Common myeloid progenitor, CD34-positive (primary cell): ENCODE measurements at regions of chr19 and their contacts with region 1.

Region 1: DNA sequence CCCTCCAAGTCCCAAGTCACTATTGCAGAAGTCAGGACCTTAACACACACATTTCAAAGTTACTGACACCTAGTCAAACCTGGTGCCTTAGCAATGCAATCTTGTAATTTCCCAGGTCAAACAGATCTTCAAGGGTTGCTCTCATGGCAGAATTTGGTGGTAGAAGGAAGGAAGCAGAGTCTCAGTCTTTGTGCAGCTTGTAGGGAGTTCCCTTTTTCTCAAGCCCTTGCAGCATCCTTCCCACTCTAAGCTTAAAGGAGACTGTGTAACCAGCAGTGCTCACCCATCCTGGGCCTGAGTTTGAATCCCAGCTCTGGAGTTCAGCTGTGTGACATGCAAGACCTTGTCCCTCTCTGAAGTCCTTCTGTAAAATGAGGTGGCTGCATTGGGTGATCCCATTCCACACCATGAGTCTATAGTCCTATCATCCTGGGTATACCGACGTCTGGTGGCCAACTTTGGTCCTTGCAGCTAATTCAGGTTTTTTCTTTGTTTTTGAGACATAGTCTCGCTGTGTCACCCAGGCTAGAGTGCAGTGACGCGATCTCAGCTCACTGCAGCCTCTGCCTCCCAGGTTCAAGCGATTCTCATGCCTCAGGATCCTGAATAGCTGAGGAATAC is 9.8 kb downstream of the SIGLEC10 start:
- DNase-seq: peak; percentile 42 to 85 (median 84)
- H3K4me3 ChIP-seq: peak overlapping the region in 1 of 7 experiments; percentile 16
- H3K27ac ChIP-seq: no peak overlapping the region
- H3K4me1 ChIP-seq: peaks cover 12 to 34% (median 32%) of the 10 kb centered on the region in 4 experiments
- H3K27me3 ChIP-seq: no peaks in the 10 kb centered on the region

Region 2: DNA sequence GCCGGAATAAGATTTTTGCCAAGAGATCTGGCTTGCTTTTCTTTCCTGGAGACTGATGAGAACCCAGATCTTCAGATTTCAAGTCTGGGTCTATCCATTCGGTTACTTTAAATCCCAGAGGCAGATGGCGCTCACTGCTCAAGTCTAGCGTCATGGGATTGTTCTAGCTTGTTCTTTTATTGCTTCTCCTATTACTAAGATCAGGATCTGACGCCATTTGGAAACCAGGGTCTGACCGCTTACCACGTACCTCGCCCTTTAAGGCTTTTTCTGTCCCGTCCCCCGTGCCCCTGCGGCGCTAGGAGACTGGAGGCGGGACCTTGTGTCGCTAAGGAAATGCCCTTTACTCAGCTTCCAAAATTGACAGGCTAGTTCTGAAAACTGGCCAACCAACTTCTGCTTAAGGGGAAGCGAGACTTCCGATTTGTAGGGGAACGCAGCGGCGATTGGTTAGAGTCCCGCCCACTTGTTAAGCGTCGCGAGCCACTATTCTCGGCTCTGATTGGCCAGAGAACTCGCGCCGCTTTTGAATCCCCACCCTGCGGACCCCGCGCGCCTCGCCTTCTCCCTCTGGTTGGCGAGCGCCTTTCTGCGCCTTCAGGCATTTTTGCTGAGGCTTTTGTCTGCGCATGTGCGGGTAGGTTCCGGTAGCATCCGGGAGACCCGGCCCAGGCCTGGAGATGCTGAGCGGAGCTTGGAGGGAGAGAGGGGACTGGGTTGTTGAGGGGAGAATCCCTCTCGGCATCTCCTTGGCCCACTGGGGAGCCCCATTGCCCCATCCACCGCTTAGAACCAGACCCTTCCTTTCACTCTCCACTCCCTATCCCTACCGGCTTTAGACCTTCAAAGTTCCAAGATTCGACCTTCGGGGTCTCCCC is 13.4 kb before region 1 on chr19:
- CTCF ChIA-PET with region 1: interaction called, 22 read pairs
- POLR2A ChIA-PET with region 1: no interaction called
- DNase-seq: peak; percentile 98 to 99 (median 99)
- H3K4me3 ChIP-seq: peak overlapping the region; percentile 25 to 81 (median 66)
- H3K27ac ChIP-seq: peak overlapping the region; percentile 51 to 85
- H3K4me1 ChIP-seq: peaks cover 0 to 28% (median 24%) of the 10 kb centered on the region in 4 experiments
- H3K27me3 ChIP-seq: no peaks in the 10 kb centered on the region

Region 3: GRCh38 chr19:51422053-51422448 is 14.4 kb after region 1 on chr19:
- CTCF ChIA-PET with region 1: interaction called, 101 read pairs
- POLR2A ChIA-PET with region 1: no interaction called
- DNase-seq: peak; percentile 75 to 82 (median 79)
- H3K4me3 ChIP-seq: peak overlapping the region in 3 of 7 experiments; percentile 33 to 48 (median 36)
- H3K27ac ChIP-seq: no peak overlapping the region
- H3K4me1 ChIP-seq: peaks cover 3 to 47% (median 33%) of the 10 kb centered on the region in 4 experiments
- H3K27me3 ChIP-seq: peaks cover 0 to 3% (median 0%) of the 10 kb centered on the region in 5 experiments